ENCODE measurements at regions of chr10 and their contacts with region 1.

Region 1: GRCh38 chr10:32318476-32318896 is 28.5 kb downstream of the EPC1 start:
- DNase-seq: no peak
- ATAC-seq: no peak
- H3K4me3 ChIP-seq: no peak overlapping the region
- H3K27ac ChIP-seq: no peak overlapping the region
- H3K4me1 ChIP-seq: no peaks in the 10 kb centered on the region
- H3K27me3 ChIP-seq: no peaks in the 10 kb centered on the region
- CTCF ChIP-seq: no peak

Region 2: DNA sequence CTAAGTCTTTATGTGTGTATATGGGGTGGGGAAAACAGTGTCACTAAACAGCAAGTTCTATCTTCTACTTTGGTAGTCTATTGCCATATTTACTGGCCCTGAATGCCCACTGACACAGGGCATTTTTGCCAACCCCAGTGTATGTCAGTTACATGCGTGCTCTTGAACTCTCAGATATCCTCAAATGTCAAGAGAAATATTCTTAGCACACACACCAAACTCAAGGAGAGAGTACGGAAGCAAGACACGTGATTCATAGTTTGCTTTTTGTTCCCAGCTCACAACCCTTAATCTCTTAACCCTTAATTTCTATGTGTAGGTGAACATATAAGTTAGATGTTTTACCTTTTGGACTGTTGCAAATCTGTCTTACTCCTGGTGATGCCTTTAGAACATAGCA is 10.9 kb before region 1 on chr10:
- CTCF ChIA-PET with region 1: no interaction called
- POLR2A ChIA-PET with region 1: no interaction called
- intact Hi-C with region 1: loop called (anchors 1 kb)
- DNase-seq: no peak
- ATAC-seq: no peak
- H3K4me3 ChIP-seq: no peak overlapping the region
- H3K27ac ChIP-seq: no peak overlapping the region
- H3K4me1 ChIP-seq: no peaks in the 10 kb centered on the region
- H3K27me3 ChIP-seq: no peaks in the 10 kb centered on the region
- CTCF ChIP-seq: no peak

Region 3: DNA sequence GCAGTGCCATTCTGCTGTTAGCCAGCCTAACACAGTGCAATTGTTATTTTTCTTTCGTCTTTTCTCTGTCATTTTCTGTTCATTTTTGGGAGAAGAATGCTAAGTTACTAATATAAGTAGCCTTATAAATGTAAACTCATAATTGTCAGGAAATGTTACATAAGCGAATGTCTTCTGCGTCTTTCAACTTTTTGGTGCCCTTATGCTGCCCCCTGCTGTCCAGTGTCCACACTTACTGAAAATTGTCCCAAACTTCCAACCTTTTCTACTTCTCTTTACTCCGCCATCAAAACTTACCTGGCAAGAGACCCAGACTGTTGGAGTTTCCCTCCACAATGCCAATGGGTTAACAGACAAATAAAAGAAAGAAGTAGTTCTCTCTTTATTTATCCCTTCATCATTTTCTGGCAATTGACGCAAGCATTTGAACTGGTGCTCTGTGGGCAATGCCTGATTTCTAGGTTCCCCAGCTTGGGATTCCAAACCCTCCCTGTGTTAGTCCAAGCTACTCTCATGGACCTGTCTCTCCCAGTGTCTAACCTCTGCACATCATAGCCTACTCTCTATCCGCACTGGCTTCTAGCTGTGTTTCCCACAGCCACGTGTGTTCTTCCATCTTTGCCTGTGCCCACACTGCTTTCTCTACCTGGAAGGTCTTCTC is 49.4 kb after region 1 on chr10:
- CTCF ChIA-PET with region 1: no interaction called
- POLR2A ChIA-PET with region 1: no interaction called
- intact Hi-C with region 1: loop called (anchors 2 kb)
- DNase-seq: peak; percentile 92
- ATAC-seq: peak; percentile 59
- H3K4me3 ChIP-seq: no peak overlapping the region
- H3K27ac ChIP-seq: no peak overlapping the region
- H3K4me1 ChIP-seq: peaks cover 9% of the 10 kb centered on the region; the same call in 1 of the 2 replicates
- H3K27me3 ChIP-seq: no peaks in the 10 kb centered on the region
- CTCF ChIP-seq: peak; percentile 98

Region 4: GRCh38 chr10:33055625-33056024 is 737.1 kb after region 1 on chr10:
- CTCF ChIA-PET with region 1: no interaction called
- POLR2A ChIA-PET with region 1: no interaction called
- intact Hi-C with region 1: no loop called
- DNase-seq: no peak
- ATAC-seq: no peak
- H3K4me3 ChIP-seq: no peak overlapping the region
- H3K27ac ChIP-seq: no peak overlapping the region
- H3K4me1 ChIP-seq: peaks cover 11% of the 10 kb centered on the region
- H3K27me3 ChIP-seq: no peaks in the 10 kb centered on the region
- CTCF ChIP-seq: no peak

Measured in PC-3 (cell line).